Left ventricle myocardium inferior (tissue), 1 donor: ENCODE measurements at regions of chr4 and their contacts with region 1.

Region 1: GRCh38 chr4:54318904-54319303 is 89.8 kb downstream of the PDGFRA start:
- DNase-seq: no peak
- H3K4me3 ChIP-seq: no peak overlapping the region
- H3K27ac ChIP-seq: no peak overlapping the region
- H3K4me1 ChIP-seq: no peaks in the 10 kb centered on the region
- H3K27me3 ChIP-seq: no peaks in the 10 kb centered on the region
- CTCF ChIP-seq: peak; percentile 79

Region 2: DNA sequence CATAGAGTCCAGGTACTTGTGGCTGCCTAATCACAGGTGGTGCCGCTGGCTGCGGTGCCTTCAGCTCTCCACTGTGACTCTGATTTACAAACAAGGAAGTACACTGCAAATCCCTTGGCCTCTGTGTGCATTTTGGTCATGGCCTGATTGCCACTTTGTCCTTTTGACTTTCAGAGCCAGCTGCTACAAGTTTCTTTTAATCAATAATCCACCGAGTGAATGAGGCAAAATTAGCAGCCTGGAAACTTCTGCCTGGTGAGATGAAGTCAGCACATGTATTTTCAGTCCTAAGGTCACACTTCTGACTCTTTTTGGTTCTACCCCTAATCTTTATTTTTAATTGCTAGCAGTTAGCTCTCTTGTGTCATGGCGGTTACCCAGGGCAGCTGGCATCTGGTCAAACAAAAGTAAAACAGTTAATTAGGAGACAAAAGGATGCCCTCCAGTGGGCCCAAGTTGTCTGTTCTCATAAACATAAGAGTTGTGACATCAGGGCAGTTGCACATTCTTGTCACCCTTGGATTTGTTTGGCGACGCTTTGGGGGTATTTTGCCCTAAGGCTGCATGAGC is 665.3 kb before region 1 on chr4:
- intact Hi-C with region 1: no loop called
- DNase-seq: no peak
- H3K4me3 ChIP-seq: no peak overlapping the region
- H3K27ac ChIP-seq: peak overlapping the region; percentile 83
- H3K4me1 ChIP-seq: peaks cover 26% of the 10 kb centered on the region
- H3K27me3 ChIP-seq: no peaks in the 10 kb centered on the region
- CTCF ChIP-seq: peak; percentile 30

Region 3: GRCh38 chr4:54414545-54414944 is 95.6 kb after region 1 on chr4:
- intact Hi-C with region 1: no loop called
- DNase-seq: no peak
- H3K4me3 ChIP-seq: no peak overlapping the region
- H3K27ac ChIP-seq: no peak overlapping the region
- H3K4me1 ChIP-seq: no peaks in the 10 kb centered on the region
- H3K27me3 ChIP-seq: no peaks in the 10 kb centered on the region
- CTCF ChIP-seq: no peak

Region 4: GRCh38 chr4:54440394-54441136 is 121.7 kb after region 1 on chr4:
- intact Hi-C with region 1: loop called (anchors 5 kb)
- DNase-seq: no peak
- H3K4me3 ChIP-seq: peak overlapping the region; percentile 40
- H3K27ac ChIP-seq: peak overlapping the region; percentile 65
- H3K4me1 ChIP-seq: peaks cover 9% of the 10 kb centered on the region
- H3K27me3 ChIP-seq: no peaks in the 10 kb centered on the region
- CTCF ChIP-seq: peak; percentile 78

Region 5: DNA sequence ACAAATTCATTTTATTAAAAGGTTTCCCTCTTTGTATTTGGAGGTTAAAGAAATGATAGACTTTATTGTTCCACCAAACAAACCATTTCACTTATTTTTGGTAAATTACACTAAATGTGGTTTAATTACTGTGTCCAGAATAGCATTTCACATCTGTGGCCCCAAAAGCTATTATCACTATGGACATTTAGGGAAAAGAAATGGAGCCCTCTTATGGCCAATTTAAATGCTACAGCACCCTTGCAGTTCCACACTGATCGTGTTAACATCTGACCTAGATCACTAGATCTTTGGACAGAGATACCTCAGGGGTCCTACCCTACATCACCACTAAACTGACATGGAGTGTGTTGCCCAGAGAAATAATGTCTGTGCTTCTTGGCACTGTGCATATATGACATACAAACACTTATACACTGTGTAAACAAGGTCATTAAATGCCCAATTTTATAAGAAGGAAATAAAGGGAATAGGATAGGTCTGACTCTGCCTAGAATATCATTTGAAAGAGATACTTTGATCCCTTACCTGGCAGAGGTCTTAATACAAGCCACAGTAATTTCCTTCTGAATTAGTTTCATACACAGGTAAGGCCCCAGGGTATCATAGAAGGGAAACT is 642.6 kb after region 1 on chr4:
- intact Hi-C with region 1: loop called (anchors 10 kb)
- DNase-seq: no peak
- H3K4me3 ChIP-seq: no peak overlapping the region
- H3K27ac ChIP-seq: no peak overlapping the region
- H3K4me1 ChIP-seq: no peaks in the 10 kb centered on the region
- H3K27me3 ChIP-seq: no peaks in the 10 kb centered on the region
- CTCF ChIP-seq: peak; percentile 73